ENCODE measurements at regions of chr1 and their contacts with region 1.

Region 1: GRCh38 chr1:24526940-24527542 is 24.4 kb downstream of the RCAN3 start:
- DNase-seq: peak in 7 of 9 experiments; percentile 13 to 72 (median 58)
- ATAC-seq: peak; percentile 81
- H3K4me3 ChIP-seq: no peak overlapping the region
- H3K4me3 Mint-ChIP-seq: no peak overlapping the region
- H3K27ac ChIP-seq: no peak overlapping the region
- H3K27ac Mint-ChIP-seq: peak overlapping the region; percentile 85
- H3K4me1 ChIP-seq: peaks cover 63% of the 10 kb centered on the region
- H3K4me1 Mint-ChIP-seq: peaks cover 63% of the 10 kb centered on the region
- H3K27me3 ChIP-seq: no peaks in the 10 kb centered on the region
- H3K27me3 Mint-ChIP-seq: no peaks in the 10 kb centered on the region
- CTCF ChIP-seq: peak; percentile 61

Region 2: DNA sequence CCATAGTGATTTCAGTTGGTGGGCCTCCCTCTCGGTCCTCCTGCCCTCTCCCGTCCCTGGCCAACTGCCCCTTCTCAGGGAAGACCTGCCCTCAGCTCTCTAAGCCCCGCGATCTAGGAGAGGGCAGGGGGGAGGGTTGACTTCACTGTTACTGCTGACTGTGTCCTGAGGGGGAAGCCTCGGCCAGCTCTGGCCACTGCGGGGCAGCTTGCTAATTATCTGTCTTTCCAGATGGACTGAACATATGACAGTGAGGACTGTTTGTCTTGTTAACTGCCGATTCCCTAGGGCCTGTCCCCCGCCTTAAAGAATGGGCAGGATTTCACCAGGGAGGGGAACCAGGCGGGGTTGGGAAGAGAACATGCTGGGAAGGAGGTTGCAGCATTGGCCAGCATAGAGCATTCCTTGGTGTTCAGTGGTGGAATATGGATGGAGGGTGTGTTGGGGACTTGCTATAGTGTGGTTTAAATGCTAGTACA is 88.6 kb before region 1 on chr1:
- CTCF ChIA-PET with region 1: interaction called, 10 read pairs
- POLR2A ChIA-PET with region 1: no interaction called
- intact Hi-C with region 1: no loop called
- DNase-seq: no peak
- ATAC-seq: no peak
- H3K4me3 ChIP-seq: no peak overlapping the region
- H3K4me3 Mint-ChIP-seq: no peak overlapping the region
- H3K27ac ChIP-seq: no peak overlapping the region
- H3K27ac Mint-ChIP-seq: peak overlapping the region; percentile 72
- H3K4me1 ChIP-seq: peaks cover 4% of the 10 kb centered on the region
- H3K4me1 Mint-ChIP-seq: peaks cover 32% of the 10 kb centered on the region
- H3K27me3 ChIP-seq: no peaks in the 10 kb centered on the region
- H3K27me3 Mint-ChIP-seq: no peaks in the 10 kb centered on the region
- CTCF ChIP-seq: no peak

Region 3: GRCh38 chr1:24481101-24481500 is 45.9 kb before region 1 on chr1:
- CTCF ChIA-PET with region 1: interaction called, 17 read pairs
- POLR2A ChIA-PET with region 1: interaction called, 3 read pairs
- intact Hi-C with region 1: loop called in 1 of 2 experiments (anchors 2 kb)
- DNase-seq: peak in 7 of 9 experiments; percentile 24 to 78 (median 61)
- ATAC-seq: peak; percentile 59
- H3K4me3 ChIP-seq: peak overlapping the region in 1 of 2 experiments; percentile 40
- H3K4me3 Mint-ChIP-seq: peak overlapping the region; percentile 73
- H3K27ac ChIP-seq: peak overlapping the region; percentile 67 to 68
- H3K27ac Mint-ChIP-seq: peak overlapping the region; percentile 98
- H3K4me1 ChIP-seq: peaks cover 64% of the 10 kb centered on the region
- H3K4me1 Mint-ChIP-seq: peaks cover 65% of the 10 kb centered on the region
- H3K27me3 ChIP-seq: no peaks in the 10 kb centered on the region
- H3K27me3 Mint-ChIP-seq: no peaks in the 10 kb centered on the region
- CTCF ChIP-seq: no peak

Region 4: DNA sequence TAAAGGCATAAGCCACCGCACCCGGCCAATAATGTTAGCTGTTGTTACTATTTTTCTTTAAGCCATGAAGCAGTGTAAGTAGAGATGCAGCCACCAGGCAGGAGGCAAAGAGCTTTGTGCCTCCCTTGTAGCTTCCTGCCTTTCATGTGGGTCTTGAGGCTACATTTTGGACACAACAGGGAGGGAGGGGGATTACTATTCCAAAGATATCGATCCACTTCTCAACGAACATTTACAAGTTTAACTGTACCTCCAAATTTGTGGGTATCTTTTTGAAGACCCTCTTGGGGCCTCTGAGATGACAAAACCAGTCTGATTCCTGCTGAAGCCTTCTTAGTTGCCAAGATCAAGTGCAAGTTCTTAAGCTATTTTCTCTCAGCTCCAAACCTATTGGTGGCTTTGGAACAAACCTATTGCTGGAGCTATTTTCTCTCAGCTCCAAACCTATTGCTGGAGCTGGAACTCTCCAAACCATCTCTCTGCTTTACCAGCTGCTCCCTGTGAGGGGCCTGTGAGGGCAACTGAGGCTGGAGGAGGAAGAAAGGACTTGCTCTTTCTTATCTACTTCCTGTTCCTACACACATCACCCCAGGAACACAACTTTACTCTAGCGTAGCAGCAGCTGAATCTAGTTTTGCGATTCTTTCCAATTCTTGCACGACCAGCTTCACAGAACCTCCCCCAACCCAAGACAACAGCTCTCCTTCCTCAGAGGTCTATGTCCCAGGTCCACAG is 40.5 kb before region 1 on chr1:
- CTCF ChIA-PET with region 1: interaction called, 17 read pairs
- POLR2A ChIA-PET with region 1: interaction called, 3 read pairs
- intact Hi-C with region 1: loop called in 1 of 2 experiments (anchors 2 kb)
- DNase-seq: peak in 7 of 9 experiments; percentile 9 to 80 (median 53)
- ATAC-seq: peak; percentile 30
- H3K4me3 ChIP-seq: peak overlapping the region in 1 of 2 experiments; percentile 3
- H3K4me3 Mint-ChIP-seq: peak overlapping the region; percentile 50
- H3K27ac ChIP-seq: peak overlapping the region; percentile 29 to 41
- H3K27ac Mint-ChIP-seq: peak overlapping the region; percentile 98
- H3K4me1 ChIP-seq: peaks cover 82% of the 10 kb centered on the region
- H3K4me1 Mint-ChIP-seq: peaks cover 72% of the 10 kb centered on the region
- H3K27me3 ChIP-seq: no peaks in the 10 kb centered on the region
- H3K27me3 Mint-ChIP-seq: no peaks in the 10 kb centered on the region
- CTCF ChIP-seq: no peak

Region 5: DNA sequence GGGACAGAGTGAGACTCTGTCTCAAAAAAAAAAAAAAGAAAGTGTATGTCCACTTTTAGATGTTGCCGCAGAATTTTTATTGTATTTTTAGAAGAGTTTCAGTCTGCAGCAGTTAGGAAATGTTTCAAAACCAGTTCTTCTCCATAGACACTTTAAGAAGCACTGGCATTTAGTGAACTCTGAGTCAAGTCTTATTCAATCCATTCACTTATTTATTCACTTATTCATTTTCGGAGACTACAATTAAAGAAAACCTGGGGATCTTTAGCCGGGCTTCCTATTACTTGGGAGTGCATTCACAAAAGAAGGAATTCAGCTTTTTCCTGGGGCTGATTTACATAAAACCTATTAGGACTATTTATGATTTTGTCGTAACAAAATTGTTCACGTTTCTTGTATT is 12.1 kb before region 1 on chr1:
- CTCF ChIA-PET with region 1: interaction called, 15 read pairs
- POLR2A ChIA-PET with region 1: interaction called, 5 read pairs
- intact Hi-C with region 1: no loop called
- DNase-seq: no peak
- ATAC-seq: no peak
- H3K4me3 ChIP-seq: no peak overlapping the region
- H3K4me3 Mint-ChIP-seq: peak overlapping the region; percentile 12
- H3K27ac ChIP-seq: no peak overlapping the region
- H3K27ac Mint-ChIP-seq: peak overlapping the region; percentile 81
- H3K4me1 ChIP-seq: peaks cover 68% of the 10 kb centered on the region
- H3K4me1 Mint-ChIP-seq: peaks cover 71% of the 10 kb centered on the region
- H3K27me3 ChIP-seq: no peaks in the 10 kb centered on the region
- H3K27me3 Mint-ChIP-seq: no peaks in the 10 kb centered on the region
- CTCF ChIP-seq: no peak